GM12878 (cell line): ENCODE measurements at regions of chr2 and their contacts with region 1.

Region 1: DNA sequence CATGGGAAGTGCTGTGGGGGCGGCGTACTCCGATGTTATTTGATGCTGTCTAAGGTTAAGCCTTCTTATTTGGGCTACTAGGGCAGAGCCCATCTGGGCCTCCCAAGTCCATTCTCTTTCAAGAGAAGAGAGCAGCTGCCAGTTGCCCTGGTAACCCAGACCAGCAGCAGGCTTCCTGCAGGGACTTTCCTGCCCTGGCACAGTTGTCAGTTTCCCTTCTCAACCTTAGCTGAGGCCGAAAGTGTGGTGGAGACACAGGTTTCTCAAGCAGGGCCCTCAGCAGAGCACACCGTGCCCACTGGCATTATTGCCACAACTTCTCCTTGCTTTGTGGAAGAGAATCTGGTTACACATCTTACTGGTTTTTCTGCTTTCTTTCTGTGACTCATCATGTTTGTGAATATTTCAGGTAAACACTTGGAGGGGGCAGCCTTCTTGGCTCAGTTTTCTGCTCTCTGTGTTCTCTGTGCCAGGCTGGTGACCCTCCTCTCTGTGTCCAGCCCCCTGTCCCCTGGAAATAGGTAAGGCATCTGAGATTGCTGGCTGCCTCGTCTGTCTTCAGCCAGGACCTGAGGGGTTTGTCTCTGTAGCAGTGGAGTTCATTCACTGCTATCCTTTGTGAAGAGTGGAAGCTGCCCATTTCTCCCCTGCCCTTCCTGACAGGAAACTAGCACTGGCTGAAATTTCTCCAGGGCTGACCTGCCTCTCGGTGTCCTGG is 111.0 kb downstream of the B3GNT2 start:
- DNase-seq: peak; percentile 95
- ATAC-seq: peak; percentile 65
- H3K4me3 ChIP-seq: peak overlapping the region; percentile 38; the same call in 1 of the 2 replicates
- H3K27ac ChIP-seq: peak overlapping the region; percentile 99
- H3K4me1 ChIP-seq: peaks cover 92% of the 10 kb centered on the region
- H3K27me3 ChIP-seq: no peaks in the 10 kb centered on the region
- CTCF ChIP-seq: no peak
- EP300 ChIP-seq: peak; percentile 38 to 45; a peak in 2 of 4 replicates
- POLR2A ChIP-seq: peak; percentile 45; the same call in 1 of the 2 replicates
- RAD21 ChIP-seq: no peak

Region 2: DNA sequence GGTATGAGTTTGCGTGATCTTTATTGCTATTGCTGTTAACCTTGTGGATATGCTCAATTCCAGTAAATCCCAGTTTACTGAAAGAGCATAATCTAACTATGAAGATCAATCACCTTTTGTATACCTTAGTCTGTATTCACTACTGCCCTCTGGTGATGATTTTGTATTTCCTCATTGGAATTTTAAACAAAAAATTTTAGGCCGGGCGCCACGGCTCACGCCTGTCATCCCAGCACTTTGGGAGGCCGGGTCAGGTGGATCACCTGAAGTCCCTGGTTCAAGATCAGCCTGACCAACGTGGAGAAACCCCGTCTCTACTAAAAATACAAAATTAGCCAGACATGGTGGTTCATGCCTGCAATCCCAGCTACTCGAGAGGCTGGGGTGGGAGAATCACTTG is 396.3 kb before region 1 on chr2:
- CTCF ChIA-PET with region 1: no interaction called
- POLR2A ChIA-PET with region 1: no interaction called
- RAD21 ChIA-PET with region 1: no interaction called
- SMC1A ChIA-PET with region 1: no interaction called
- in situ Hi-C with region 1: no loop called
- intact Hi-C with region 1: loop called (anchors 10 kb)
- DNase-seq: no peak
- ATAC-seq: no peak
- H3K4me3 ChIP-seq: no peak overlapping the region
- H3K27ac ChIP-seq: no peak overlapping the region
- H3K4me1 ChIP-seq: no peaks in the 10 kb centered on the region
- H3K27me3 ChIP-seq: no peaks in the 10 kb centered on the region
- CTCF ChIP-seq: peak in 2 of 3 experiments; percentile 12 to 19; a peak in 2 of 6 replicates
- EP300 ChIP-seq: no peak
- POLR2A ChIP-seq: no peak
- RAD21 ChIP-seq: no peak

Region 3: GRCh38 chr2:62195421-62196277 is 111.3 kb before region 1 on chr2 and contains the start of gene B3GNT2:
- CTCF ChIA-PET with region 1: interaction called, 15 read pairs
- POLR2A ChIA-PET with region 1: interaction called, 49 read pairs
- RAD21 ChIA-PET with region 1: interaction called, 114 read pairs
- SMC1A ChIA-PET with region 1: interaction called, 47 read pairs
- in situ Hi-C with region 1: no loop called
- intact Hi-C with region 1: loop called (anchors 2 kb)
- DNase-seq: no peak
- ATAC-seq: peak; percentile 63
- H3K4me3 ChIP-seq: peak within 1 kb of the TSS; percentile 86
- H3K27ac ChIP-seq: peak within 1 kb of the TSS; percentile 87
- H3K4me1 ChIP-seq: peaks cover 9% of the 10 kb centered on the region
- H3K27me3 ChIP-seq: no peaks in the 10 kb centered on the region
- CTCF ChIP-seq: no peak
- EP300 ChIP-seq: no peak
- POLR2A ChIP-seq: peak; percentile 91
- RAD21 ChIP-seq: no peak
- polyA plus RNA-seq, gene B3GNT2: 19.7 to 36.5 TPM

Region 4: GRCh38 chr2:62287899-62288880 is 18.7 kb before region 1 on chr2:
- CTCF ChIA-PET with region 1: interaction called, 12 read pairs
- POLR2A ChIA-PET with region 1: interaction called, 25 read pairs
- RAD21 ChIA-PET with region 1: interaction called, 21 read pairs
- SMC1A ChIA-PET with region 1: interaction called, 52 read pairs
- in situ Hi-C with region 1: no loop called
- intact Hi-C with region 1: no loop called
- DNase-seq: peak; percentile 94
- ATAC-seq: peak; percentile 91
- H3K4me3 ChIP-seq: no peak overlapping the region
- H3K27ac ChIP-seq: peak overlapping the region; percentile 3; the same call in 1 of the 2 replicates
- H3K4me1 ChIP-seq: peaks cover 38% of the 10 kb centered on the region
- H3K27me3 ChIP-seq: no peaks in the 10 kb centered on the region
- CTCF ChIP-seq: no peak
- EP300 ChIP-seq: 0 out of 4 replicates have a peak, but pooled peaks of 1 of the 2 experiments have one; percentile 34
- POLR2A ChIP-seq: no peak
- RAD21 ChIP-seq: no peak

Region 5: GRCh38 chr2:62334440-62335058 is 27.6 kb after region 1 on chr2:
- CTCF ChIA-PET with region 1: interaction called, 17 read pairs
- POLR2A ChIA-PET with region 1: interaction called, 37 read pairs
- RAD21 ChIA-PET with region 1: interaction called, 126 read pairs
- SMC1A ChIA-PET with region 1: interaction called, 467 read pairs
- in situ Hi-C with region 1: no loop called
- intact Hi-C with region 1: no loop called
- DNase-seq: peak; percentile 66
- ATAC-seq: peak; percentile 74
- H3K4me3 ChIP-seq: no peak overlapping the region
- H3K27ac ChIP-seq: peak overlapping the region; percentile 99
- H3K4me1 ChIP-seq: peaks cover 40% of the 10 kb centered on the region
- H3K27me3 ChIP-seq: no peaks in the 10 kb centered on the region
- CTCF ChIP-seq: no peak
- EP300 ChIP-seq: no peak
- POLR2A ChIP-seq: peak; percentile 59; the same call in 1 of the 2 replicates
- RAD21 ChIP-seq: 0 out of 2 replicates have a peak, but pooled peaks have one; percentile 1

Region 6: GRCh38 chr2:62391696-62392095 is 84.8 kb after region 1 on chr2:
- CTCF ChIA-PET with region 1: no interaction called
- POLR2A ChIA-PET with region 1: no interaction called
- RAD21 ChIA-PET with region 1: no interaction called
- SMC1A ChIA-PET with region 1: no interaction called
- in situ Hi-C with region 1: no loop called
- intact Hi-C with region 1: no loop called
- DNase-seq: no peak
- ATAC-seq: no peak
- H3K4me3 ChIP-seq: no peak overlapping the region
- H3K27ac ChIP-seq: no peak overlapping the region
- H3K4me1 ChIP-seq: no peaks in the 10 kb centered on the region
- H3K27me3 ChIP-seq: no peaks in the 10 kb centered on the region
- CTCF ChIP-seq: no peak
- EP300 ChIP-seq: no peak
- POLR2A ChIP-seq: no peak
- RAD21 ChIP-seq: no peak

Region 7: GRCh38 chr2:62415019-62415431 is 108.1 kb after region 1 on chr2:
- CTCF ChIA-PET with region 1: interaction called, 8 read pairs
- POLR2A ChIA-PET with region 1: interaction called, 4 read pairs
- RAD21 ChIA-PET with region 1: interaction called, 14 read pairs
- SMC1A ChIA-PET with region 1: interaction called, 66 read pairs
- in situ Hi-C with region 1: no loop called
- intact Hi-C with region 1: loop called (anchors 2 kb)
- DNase-seq: peak; percentile 78
- ATAC-seq: peak; percentile 85
- H3K4me3 ChIP-seq: peak overlapping the region; percentile 37; the same call in 1 of the 2 replicates
- H3K27ac ChIP-seq: peak overlapping the region; percentile 70
- H3K4me1 ChIP-seq: peaks cover 39% of the 10 kb centered on the region
- H3K27me3 ChIP-seq: no peaks in the 10 kb centered on the region
- CTCF ChIP-seq: no peak
- EP300 ChIP-seq: peak in 1 of 2 experiments; percentile 35; a peak in 1 of 4 replicates
- POLR2A ChIP-seq: no peak
- RAD21 ChIP-seq: peak; percentile 3; the same call in 1 of the 2 replicates

Region 8: GRCh38 chr2:62768615-62769014 is 461.7 kb after region 1 on chr2:
- CTCF ChIA-PET with region 1: no interaction called
- POLR2A ChIA-PET with region 1: no interaction called
- RAD21 ChIA-PET with region 1: no interaction called
- SMC1A ChIA-PET with region 1: no interaction called
- in situ Hi-C with region 1: no loop called
- intact Hi-C with region 1: no loop called
- DNase-seq: no peak
- ATAC-seq: no peak
- H3K4me3 ChIP-seq: no peak overlapping the region
- H3K27ac ChIP-seq: no peak overlapping the region
- H3K4me1 ChIP-seq: no peaks in the 10 kb centered on the region
- H3K27me3 ChIP-seq: no peaks in the 10 kb centered on the region
- CTCF ChIP-seq: no peak
- EP300 ChIP-seq: no peak
- POLR2A ChIP-seq: no peak
- RAD21 ChIP-seq: no peak